Activated CD4-positive, alpha-beta memory T cell treated with anti-CD3 and anti-CD28 coated beads for 36 hours (primary cell): ENCODE measurements at regions of chr12 and their contacts with region 1.

Region 1: GRCh38 chr12:112937741-112938719 is at the start of gene OAS3:
- DNase-seq: peak; percentile 77
- H3K4me3 Mint-ChIP-seq: peak within 1 kb of the TSS; percentile 87
- H3K27ac Mint-ChIP-seq: peak within 1 kb of the TSS; percentile 75
- H3K4me1 Mint-ChIP-seq: peaks cover 35% of the 10 kb centered on the region
- H3K27me3 Mint-ChIP-seq: no peaks in the 10 kb centered on the region
- total RNA-seq, gene OAS3: 34.6 to 37.1 TPM

Region 2: DNA sequence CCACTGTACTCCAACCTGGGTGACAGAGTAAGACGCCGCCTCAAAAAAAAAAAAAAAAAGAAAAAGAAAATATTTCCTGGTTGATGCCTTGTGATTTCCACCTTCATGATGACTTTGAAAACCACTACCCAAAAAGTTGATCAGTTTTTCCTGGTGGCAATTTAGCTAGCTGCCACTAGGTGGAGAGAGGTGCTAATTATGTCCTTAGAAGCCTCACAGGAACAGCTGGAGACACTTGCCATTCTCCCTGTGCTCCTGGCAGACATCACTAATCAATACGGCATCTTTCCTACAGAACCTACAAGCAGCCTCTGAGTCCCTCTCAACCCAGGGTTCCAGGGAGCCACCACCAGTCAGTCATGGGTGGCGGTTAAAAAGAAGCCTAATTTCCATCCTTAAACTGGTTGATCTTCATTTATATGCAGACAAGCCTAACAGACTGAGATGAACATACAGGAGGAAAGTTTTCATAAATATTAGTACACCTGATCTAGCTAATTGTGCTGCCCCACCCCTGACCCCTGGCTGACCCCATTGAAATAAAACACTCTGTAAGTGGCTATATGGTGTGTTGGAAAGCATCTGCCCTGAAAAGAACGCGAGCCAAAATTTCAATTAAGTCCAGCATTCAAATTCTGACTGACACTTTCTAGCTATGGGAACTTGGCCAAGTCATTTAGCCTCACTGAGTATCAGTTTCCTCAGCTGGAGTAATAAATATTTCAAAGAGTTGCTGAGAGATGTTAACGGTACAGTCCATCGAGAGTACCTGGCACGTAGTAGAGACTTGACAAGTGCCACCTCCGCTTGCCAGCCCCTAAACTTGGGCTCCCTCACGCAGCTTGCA is 37.5 kb before region 1 on chr12:
- CTCF ChIA-PET with region 1: interaction called, 10 read pairs
- POLR2A ChIA-PET with region 1: no interaction called
- intact Hi-C with region 1: no loop called
- DNase-seq: peak; percentile 56
- H3K4me3 Mint-ChIP-seq: no peak overlapping the region
- H3K27ac Mint-ChIP-seq: no peak overlapping the region
- H3K4me1 Mint-ChIP-seq: peaks cover 17% of the 10 kb centered on the region
- H3K27me3 Mint-ChIP-seq: peaks cover 1% of the 10 kb centered on the region

Region 3: GRCh38 chr12:112906712-112907414 is 31.2 kb before region 1 on chr12 and contains the start of gene OAS1:
- CTCF ChIA-PET with region 1: interaction called, 4 read pairs
- POLR2A ChIA-PET with region 1: interaction called, 5 read pairs
- intact Hi-C with region 1: loop called (anchors 2 kb)
- DNase-seq: peak; percentile 58
- H3K4me3 Mint-ChIP-seq: peak within 1 kb of the TSS; percentile 89
- H3K27ac Mint-ChIP-seq: peak within 1 kb of the TSS; percentile 89
- H3K4me1 Mint-ChIP-seq: peaks cover 58% of the 10 kb centered on the region
- H3K27me3 Mint-ChIP-seq: no peaks in the 10 kb centered on the region
- total RNA-seq, gene OAS1: 46.0 to 49.1 TPM

Region 4: GRCh38 chr12:112978163-112979040 is 40.4 kb after region 1 on chr12 and contains the start of gene OAS2:
- CTCF ChIA-PET with region 1: interaction called, 5 read pairs
- POLR2A ChIA-PET with region 1: interaction called, 9 read pairs
- intact Hi-C with region 1: loop called (anchors 1 kb)
- DNase-seq: peak; percentile 91
- H3K4me3 Mint-ChIP-seq: peak within 1 kb of the TSS; percentile 81
- H3K27ac Mint-ChIP-seq: peak within 1 kb of the TSS; percentile 100
- H3K4me1 Mint-ChIP-seq: peaks cover 24% of the 10 kb centered on the region
- H3K27me3 Mint-ChIP-seq: no peaks in the 10 kb centered on the region
- total RNA-seq, gene OAS2: 140 to 148 TPM